ENCODE measurements at regions of chr15 and their contacts with region 1.

Region 1: DNA sequence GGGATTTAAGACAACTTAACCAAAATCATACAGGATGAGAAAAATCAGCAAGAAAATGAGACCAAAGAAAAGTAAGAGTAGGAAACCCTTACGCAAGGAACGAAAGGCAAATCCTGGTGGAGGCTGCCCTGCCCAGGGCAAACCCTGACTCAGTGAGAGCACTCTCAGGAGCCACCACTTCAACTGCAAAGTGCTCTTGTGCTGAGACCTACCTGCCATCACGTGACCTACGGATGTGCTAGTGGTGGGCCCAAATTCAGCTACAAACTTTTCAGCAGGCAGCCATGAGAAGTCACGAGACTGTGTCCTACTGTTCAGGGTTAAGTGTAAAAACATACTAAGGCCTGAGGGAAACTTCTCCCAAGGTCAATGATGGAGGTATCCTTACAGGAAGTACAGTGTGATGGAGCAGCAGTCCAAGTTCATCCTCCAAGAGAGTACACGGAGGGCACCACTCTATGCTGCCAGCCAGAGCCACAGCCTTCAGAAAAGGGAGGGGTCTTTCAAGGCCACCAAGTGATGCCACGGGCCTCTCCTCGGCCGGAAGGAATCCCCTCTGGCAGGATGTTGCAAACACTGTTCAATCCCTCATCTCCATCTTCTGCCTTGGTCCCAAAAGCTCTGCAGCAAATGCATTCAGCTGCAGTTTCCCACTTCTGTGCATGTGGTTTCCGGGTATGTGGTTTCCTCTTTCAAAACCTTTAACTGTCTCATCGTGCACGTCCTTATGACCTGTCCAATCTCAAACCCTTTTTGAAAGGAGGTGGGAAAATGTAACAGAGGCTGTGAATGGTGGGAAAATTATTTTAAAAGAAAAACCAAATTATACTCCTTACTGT is 9.5 kb downstream of the CHSY1 start:
- DNase-seq: no peak
- ATAC-seq: peak in 3 of 4 donors; percentile 42 to 53 (median 50)
- H3K4me3 ChIP-seq: no peak overlapping the region
- H3K27ac ChIP-seq: peak overlapping the region; percentile 17
- H3K4me1 ChIP-seq: peaks cover 63% of the 10 kb centered on the region
- H3K27me3 ChIP-seq: no peaks in the 10 kb centered on the region
- CTCF ChIP-seq: no peak

Region 2: DNA sequence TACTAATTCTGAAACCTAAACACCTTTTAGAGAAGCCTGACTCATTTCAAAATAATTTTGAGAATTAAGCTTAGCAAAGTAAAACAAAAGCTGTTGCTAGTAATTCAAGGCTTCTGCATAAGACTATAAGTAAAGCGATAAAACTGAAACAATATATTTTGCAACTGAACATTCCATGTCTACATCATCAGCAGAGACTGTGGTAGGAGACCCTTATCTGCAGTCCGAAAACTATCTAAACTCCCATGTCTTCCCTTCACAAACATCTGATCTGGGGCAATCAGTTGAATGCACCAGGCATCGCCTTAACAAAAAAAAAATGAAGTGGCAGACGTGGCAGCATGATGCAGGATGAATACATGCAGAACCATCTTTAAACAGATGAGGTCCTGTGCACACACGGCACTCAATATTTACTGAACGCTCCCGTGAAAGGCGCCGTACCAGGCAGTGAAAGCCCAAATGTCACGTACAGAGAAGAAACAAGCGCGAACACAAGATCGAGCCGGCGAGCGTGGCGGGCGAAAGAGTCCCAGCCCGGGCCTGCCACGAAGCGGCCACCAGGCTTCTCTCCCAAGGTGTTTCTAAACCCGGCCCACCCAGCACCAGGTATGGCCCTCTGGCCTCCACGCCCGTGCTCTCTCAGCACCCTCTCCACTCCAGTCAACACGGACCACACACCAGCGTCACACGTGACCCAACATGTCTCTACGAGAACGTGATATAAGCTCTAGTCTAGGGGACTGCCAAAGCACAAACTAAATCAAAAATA is 53.6 kb before region 1 on chr15:
- intact Hi-C with region 1: loop called in 1 of 2 experiments (anchors 10 kb)
- DNase-seq: no peak
- ATAC-seq: peak; percentile 31 to 59 (median 48)
- H3K4me3 ChIP-seq: peak overlapping the region; percentile 57
- H3K27ac ChIP-seq: peak overlapping the region; percentile 62
- H3K4me1 ChIP-seq: peaks cover 43% of the 10 kb centered on the region
- H3K27me3 ChIP-seq: no peaks in the 10 kb centered on the region
- CTCF ChIP-seq: no peak

Region 3: DNA sequence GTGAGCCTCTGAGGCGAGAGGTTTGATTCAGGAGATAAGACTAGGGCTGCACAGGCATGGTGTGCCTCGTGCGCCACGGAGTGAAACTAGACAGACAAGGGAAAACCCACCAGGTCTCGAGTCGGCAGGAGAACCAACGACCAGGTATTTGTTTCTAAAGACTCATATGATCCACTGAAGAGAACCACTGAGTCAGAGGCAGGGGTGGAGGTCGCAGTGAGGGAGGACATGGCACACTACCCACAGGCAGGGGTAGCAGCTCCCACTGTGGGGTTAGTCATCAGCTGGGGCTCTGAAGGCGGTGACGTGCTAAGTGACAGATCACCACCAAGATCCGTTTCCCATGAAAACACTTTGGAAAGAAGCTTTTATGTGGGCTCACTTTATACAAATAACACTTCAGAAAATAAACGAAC is 36.2 kb before region 1 on chr15:
- intact Hi-C with region 1: loop called in 1 of 2 experiments (anchors 5 kb)
- DNase-seq: no peak
- ATAC-seq: peak in 1 of 4 donors; percentile 36
- H3K4me3 ChIP-seq: no peak overlapping the region
- H3K27ac ChIP-seq: no peak overlapping the region
- H3K4me1 ChIP-seq: peaks cover 28% of the 10 kb centered on the region
- H3K27me3 ChIP-seq: no peaks in the 10 kb centered on the region
- CTCF ChIP-seq: no peak